Mammary epithelial cell (primary cell): ENCODE measurements at regions of chr10 and their contacts with region 1.

Region 1: GRCh38 chr10:30219971-30220751 is 128.9 kb downstream of the MTPAP start:
- DNase-seq: peak; percentile 63
- H3K4me3 ChIP-seq: peak overlapping the region in 2 of 3 experiments; percentile 11 to 29
- H3K27ac ChIP-seq: peak overlapping the region; percentile 30
- H3K4me1 ChIP-seq: peaks cover 14% of the 10 kb centered on the region
- H3K27me3 ChIP-seq: no peaks in the 10 kb centered on the region
- CTCF ChIP-seq: no peak

Region 2: DNA sequence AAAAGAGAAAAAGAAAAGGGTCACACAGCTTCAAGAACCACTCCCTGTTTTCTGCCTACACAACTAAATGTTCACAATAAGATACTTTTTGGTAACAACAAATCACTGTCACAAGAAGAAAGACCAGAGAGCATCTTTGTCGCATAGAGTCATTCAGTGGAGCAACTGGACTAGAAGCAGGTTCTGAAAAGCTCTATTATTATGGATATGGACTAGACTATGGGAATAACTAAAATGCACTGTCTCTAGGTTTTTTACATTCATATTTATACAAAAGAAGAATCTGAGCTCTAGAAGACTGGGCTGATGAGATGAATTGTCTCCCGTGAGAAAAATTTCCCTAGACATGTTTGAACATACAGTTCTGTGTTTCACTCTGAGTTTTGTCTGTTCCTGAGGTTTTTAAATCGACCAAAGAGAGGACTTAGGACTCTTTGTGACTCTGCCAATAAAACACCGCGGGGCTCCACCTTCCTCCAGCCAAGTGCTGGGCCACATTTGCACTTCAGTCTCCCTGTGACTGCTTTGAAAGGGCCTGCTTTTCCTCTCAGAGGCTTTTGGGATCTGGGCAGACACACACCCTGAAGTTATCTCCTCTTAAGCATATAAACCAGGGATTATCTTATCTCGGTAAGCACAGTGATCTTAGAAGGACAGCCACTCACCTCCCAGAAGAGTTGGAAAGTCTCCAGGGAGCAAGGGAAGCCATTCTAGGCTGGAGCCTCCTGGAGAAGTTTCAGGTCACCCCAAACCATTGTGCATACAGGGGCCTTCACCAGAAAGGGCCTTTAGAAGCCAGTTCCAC is 59.8 kb before region 1 on chr10:
- CTCF ChIA-PET with region 1: no interaction called
- dilution Hi-C with region 1: no loop called
- in situ Hi-C with region 1: no loop called
- intact Hi-C with region 1: no loop called
- DNase-seq: no peak
- H3K4me3 ChIP-seq: no peak overlapping the region
- H3K27ac ChIP-seq: no peak overlapping the region
- H3K4me1 ChIP-seq: no peaks in the 10 kb centered on the region
- H3K27me3 ChIP-seq: no peaks in the 10 kb centered on the region
- CTCF ChIP-seq: no peak

Region 3: GRCh38 chr10:30178565-30178964 is 41.6 kb before region 1 on chr10:
- CTCF ChIA-PET with region 1: no interaction called
- dilution Hi-C with region 1: loop called (anchors 5 kb)
- in situ Hi-C with region 1: no loop called
- intact Hi-C with region 1: no loop called
- DNase-seq: no peak
- H3K4me3 ChIP-seq: no peak overlapping the region
- H3K27ac ChIP-seq: no peak overlapping the region
- H3K4me1 ChIP-seq: peaks cover 14% of the 10 kb centered on the region
- H3K27me3 ChIP-seq: no peaks in the 10 kb centered on the region
- CTCF ChIP-seq: no peak

Region 4: GRCh38 chr10:30727524-30727923 is 507.4 kb after region 1 on chr10:
- CTCF ChIA-PET with region 1: no interaction called
- dilution Hi-C with region 1: no loop called
- in situ Hi-C with region 1: no loop called
- intact Hi-C with region 1: no loop called
- DNase-seq: peak; percentile 16
- H3K4me3 ChIP-seq: no peak overlapping the region
- H3K27ac ChIP-seq: no peak overlapping the region
- H3K4me1 ChIP-seq: peaks cover 3% of the 10 kb centered on the region
- H3K27me3 ChIP-seq: no peaks in the 10 kb centered on the region
- CTCF ChIP-seq: no peak

Region 5: DNA sequence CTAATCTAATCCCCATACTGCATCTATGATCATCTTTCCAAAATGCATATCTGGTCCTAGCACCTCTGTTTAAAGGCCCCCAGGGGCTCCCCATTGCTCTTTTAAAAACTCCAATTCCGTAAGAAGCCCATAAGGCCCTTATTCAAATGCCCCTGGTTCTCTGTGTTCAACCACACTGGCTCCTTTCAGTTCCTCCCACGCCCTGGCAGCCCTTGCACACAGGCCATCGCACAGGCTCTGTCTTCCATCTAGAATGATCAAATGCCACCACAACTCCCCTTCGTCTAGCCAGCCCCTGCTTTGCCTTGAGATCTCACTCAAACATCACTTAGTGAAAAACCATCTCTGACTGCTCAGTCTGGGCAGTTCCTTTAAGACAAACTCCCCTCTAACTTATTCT is 522.3 kb after region 1 on chr10:
- CTCF ChIA-PET with region 1: no interaction called
- dilution Hi-C with region 1: no loop called
- in situ Hi-C with region 1: no loop called
- intact Hi-C with region 1: no loop called
- DNase-seq: no peak
- H3K4me3 ChIP-seq: no peak overlapping the region
- H3K27ac ChIP-seq: no peak overlapping the region
- H3K4me1 ChIP-seq: no peaks in the 10 kb centered on the region
- H3K27me3 ChIP-seq: no peaks in the 10 kb centered on the region
- CTCF ChIP-seq: no peak